ENCODE measurements at regions of chr1 and their contacts with region 1.

Region 1: GRCh38 chr1:75785983-75786853 is at the start of gene RABGGTB:
- DNase-seq: peak; percentile 95
- ATAC-seq: peak; percentile 95
- H3K4me3 Mint-ChIP-seq: peak within 1 kb of the TSS; percentile 99
- H3K27ac Mint-ChIP-seq: peak within 1 kb of the TSS; percentile 98
- H3K4me1 Mint-ChIP-seq: peaks cover 45% of the 10 kb centered on the region
- H3K27me3 Mint-ChIP-seq: peaks cover 4% of the 10 kb centered on the region
- total RNA-seq, gene RABGGTB: 91.7 to 97.2 TPM

Region 2: DNA sequence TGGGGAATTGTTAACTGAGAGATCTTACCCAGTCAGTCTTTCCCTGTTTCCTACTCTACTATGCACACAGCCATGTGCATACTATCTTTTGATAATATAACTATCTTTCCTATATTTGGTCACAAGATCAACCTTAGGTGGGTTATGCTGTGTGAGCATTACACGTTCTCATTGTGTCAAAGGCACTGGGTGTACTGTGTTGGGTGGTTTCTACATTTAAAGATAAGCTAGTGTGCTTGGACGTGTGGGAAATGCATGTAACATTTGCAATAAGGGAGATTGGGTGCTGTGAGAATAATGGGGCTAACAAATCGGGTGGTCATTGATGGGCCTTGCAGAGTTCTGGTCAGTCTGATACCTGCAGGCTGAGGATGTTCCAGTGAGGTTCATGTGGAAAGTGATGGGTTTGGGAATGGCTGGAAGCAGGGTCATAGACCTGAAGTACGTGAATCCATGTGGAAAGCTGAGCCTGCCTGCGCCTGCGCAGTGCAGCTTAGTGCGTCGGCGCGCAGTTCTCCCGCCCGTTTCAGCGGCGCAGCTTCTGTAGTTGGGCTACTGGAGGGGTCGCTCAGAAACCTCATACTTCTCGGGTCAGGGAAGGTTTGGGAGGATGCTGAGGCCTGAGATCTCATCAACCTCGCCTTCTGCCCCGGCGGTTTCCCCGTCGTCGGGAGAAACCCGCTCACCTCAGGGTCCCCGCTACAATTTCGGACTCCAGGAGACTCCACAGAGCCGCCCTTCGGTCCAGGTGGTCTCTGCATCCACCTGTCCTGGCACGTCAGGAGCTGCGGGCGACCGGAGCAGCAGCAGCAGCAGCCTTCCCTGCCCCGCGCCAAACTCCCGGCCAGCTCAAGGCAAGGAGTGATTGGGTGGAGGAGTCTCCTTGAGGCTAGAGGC is 10.4 kb after region 1 on chr1 and contains the start of gene MSH4:
- CTCF ChIA-PET with region 1: interaction called, 3 read pairs
- POLR2A ChIA-PET with region 1: interaction called, 21 read pairs
- DNase-seq: no peak
- ATAC-seq: peak; percentile 31
- H3K4me3 Mint-ChIP-seq: no peak within 1 kb of the TSS
- H3K27ac Mint-ChIP-seq: no peak within 1 kb of the TSS
- H3K4me1 Mint-ChIP-seq: peaks cover 20% of the 10 kb centered on the region
- H3K27me3 Mint-ChIP-seq: no peaks in the 10 kb centered on the region
- total RNA-seq, gene MSH4: 0.21 to 0.34 TPM